Left colon (tissue), 2 donors: ENCODE measurements at regions of chr3 and their contacts with region 1.

Region 1: GRCh38 chr3:194404365-194405140 is 5.5 kb upstream of the GP5 start:
- DNase-seq: peak in 1 of 2 donors; percentile 44
- ATAC-seq: peak; percentile 89

Region 2: DNA sequence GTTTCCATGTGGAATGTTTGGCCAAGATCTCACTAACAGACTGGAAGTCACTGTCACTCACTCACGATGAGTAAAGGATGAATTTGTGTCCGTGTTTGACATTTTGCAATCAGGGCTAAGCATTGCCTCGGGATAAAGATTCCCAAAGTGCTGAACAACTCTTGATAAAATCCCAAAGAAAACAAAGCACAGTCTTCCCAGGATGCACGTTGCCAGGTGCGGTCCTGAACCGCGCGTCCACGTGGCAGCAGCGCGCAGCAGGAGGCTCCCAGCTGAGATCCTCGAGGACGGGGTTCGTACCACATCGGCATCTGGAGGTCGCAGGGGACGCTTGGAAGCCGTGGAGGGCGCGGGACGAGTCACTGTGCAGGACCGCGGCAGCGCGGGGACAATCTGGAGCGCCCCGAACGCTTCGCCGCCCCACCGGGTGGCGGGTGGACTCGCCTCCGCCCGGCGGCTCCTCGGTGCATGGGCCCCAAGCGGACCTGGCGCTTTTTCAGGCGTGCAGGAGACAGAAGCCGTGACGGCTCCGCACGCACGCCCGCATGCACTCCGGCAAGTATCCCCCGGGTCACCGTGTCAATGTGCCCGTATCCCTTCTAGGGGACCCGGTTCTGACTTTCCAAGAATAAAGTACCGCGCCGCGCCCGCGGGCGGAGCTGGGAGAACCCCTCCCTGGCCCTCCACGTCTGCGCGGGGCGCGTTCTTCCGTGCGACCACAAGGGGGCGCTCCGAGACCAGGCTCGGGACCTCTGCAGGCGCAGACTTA is 71.2 kb before region 1 on chr3:
- intact Hi-C with region 1: loop called (anchors 2 to 10 kb)
- DNase-seq: peak; percentile 76 to 88
- ATAC-seq: peak; percentile 95